Endothelial cell of umbilical vein (primary cell): ENCODE measurements at regions of chr14 and their contacts with region 1.

Region 1: DNA sequence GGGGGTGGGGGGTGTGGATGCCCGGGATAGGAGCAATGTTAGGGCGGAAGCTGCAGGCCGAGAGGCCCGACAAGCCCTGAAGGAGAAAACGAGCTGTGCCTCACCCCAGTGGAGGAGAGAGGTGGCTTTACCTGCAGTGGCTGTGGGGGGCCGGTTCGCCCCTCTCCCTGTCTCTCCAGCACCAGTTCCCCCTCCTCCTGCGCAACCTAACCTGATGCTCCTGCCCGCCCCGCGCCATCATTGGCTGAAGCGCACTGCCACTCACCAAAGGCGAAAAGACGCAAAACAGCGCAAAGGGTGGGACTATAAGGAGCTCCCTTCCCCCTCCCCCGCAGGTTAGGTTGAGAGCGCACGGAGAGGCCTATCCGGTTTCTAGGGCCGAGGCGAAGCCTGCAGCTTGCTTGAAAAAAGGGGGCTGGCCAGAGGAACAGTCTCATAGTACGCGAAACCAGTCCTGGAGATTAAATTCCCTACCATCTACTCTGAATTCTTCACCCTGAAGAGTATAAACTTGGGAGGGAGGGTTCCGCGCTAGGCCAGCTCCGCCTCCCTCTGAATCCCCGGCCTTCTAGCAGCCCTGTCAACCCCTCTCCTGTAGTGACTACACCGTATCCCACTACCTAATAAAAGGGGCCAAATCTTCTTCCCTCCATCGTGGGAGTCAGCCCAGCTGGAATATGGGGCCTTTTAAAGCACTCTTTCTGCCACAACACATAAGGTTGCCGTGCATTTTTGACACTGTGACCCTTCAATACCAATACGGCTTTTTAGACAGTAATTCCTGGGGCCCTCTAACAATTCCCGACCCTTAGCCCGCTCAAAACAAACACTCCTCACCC is 18.6 kb downstream of the CHD8 start:
- DNase-seq: peak; percentile 98
- H3K4me3 ChIP-seq: peak overlapping the region; percentile 52 to 97 (median 92)
- H3K27ac ChIP-seq: peak overlapping the region; percentile 68
- H3K4me1 ChIP-seq: peaks cover 15% of the 10 kb centered on the region
- H3K27me3 ChIP-seq: no peaks in the 10 kb centered on the region
- CTCF ChIP-seq: no peak
- POLR2A ChIP-seq: peak; percentile 85

Region 2: DNA sequence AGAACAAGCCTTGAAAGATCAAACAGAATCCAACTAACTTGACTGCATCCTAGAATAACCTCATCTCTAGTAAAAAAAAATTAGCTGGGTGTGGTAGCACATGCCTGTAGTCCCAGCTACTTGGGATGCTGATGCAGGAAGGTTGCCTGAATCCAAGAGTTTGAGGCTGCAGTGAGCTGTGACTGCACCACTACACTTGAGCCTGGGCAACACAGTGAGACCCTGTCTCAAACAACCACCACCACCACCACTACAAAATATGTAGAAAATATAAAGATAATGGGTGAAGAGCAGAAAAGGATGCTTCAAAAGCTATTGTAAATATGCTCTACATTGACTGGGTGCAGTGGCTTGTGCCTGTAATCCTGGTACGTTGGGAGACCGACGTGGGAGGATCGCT is 80.8 kb before region 1 on chr14:
- CTCF ChIA-PET with region 1: no interaction called
- POLR2A ChIA-PET with region 1: no interaction called
- dilution Hi-C with region 1: no loop called
- intact Hi-C with region 1: no loop called
- DNase-seq: no peak
- H3K4me3 ChIP-seq: no peak overlapping the region
- H3K27ac ChIP-seq: no peak overlapping the region
- H3K4me1 ChIP-seq: no peaks in the 10 kb centered on the region
- H3K27me3 ChIP-seq: no peaks in the 10 kb centered on the region
- CTCF ChIP-seq: no peak
- POLR2A ChIP-seq: no peak

Region 3: GRCh38 chr14:21383848-21384493 is 53.3 kb before region 1 on chr14 and contains the start of gene SUPT16H:
- CTCF ChIA-PET with region 1: no interaction called
- POLR2A ChIA-PET with region 1: interaction called, 5 read pairs
- dilution Hi-C with region 1: no loop called
- intact Hi-C with region 1: loop called (anchors 1 kb)
- DNase-seq: peak; percentile 98
- H3K4me3 ChIP-seq: peak within 1 kb of the TSS; percentile 56 to 68 (median 68)
- H3K27ac ChIP-seq: peak within 1 kb of the TSS; percentile 86
- H3K4me1 ChIP-seq: peaks cover 29% of the 10 kb centered on the region
- H3K27me3 ChIP-seq: no peaks in the 10 kb centered on the region
- CTCF ChIP-seq: no peak
- POLR2A ChIP-seq: peak; percentile 61
- total RNA-seq, gene SUPT16H: 94.2 and 100 TPM in 2 replicates

Region 4: DNA sequence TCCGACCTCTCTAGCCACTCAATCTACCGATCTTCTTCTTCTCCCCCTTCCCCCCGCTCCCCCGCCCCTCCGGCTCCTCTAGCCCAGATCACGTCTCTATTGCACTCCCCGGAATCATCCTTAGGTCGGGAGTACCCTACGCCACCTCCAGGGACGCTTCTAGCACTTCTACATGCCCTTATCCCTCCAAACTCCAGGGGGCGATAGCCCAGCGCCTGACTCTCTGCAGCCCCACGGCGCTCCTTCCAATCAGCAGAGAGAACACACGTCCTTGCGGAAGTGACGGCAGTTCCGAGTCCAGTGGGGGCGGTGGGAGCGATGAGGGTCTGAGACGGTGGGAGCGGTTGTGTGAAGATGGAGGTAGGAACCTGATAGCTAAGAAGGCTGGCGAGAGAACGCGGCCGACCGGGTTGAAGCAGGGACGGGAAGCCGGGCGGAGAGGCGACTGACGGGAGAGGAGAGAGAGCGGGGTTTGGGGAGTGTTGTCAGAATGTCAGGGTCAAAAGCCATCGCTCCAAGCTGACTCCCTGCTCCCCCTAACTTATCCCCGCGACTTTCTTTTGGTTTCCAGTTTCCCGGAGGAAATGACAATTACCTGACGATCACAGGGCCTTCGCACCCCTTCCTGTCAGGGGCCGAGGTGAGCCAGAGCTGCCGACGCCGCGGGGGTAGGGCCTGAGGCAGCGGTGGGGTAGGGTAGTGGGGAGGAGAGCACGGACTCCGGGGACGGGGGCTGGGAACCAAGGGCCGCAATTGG is 39.8 kb after region 1 on chr14 and contains the starts of genes RAB2B and TOX4:
- CTCF ChIA-PET with region 1: interaction called, 13 read pairs
- POLR2A ChIA-PET with region 1: interaction called, 3 read pairs
- dilution Hi-C with region 1: no loop called
- intact Hi-C with region 1: loop called (anchors 1 kb)
- DNase-seq: peak; percentile 99
- H3K4me3 ChIP-seq: peak within 1 kb of the TSS; percentile 69 to 95 (median 93)
- H3K27ac ChIP-seq: peak within 1 kb of the TSS; percentile 97
- H3K4me1 ChIP-seq: peaks cover 20% of the 10 kb centered on the region
- H3K27me3 ChIP-seq: no peaks in the 10 kb centered on the region
- CTCF ChIP-seq: peak; percentile 91 to 99
- POLR2A ChIP-seq: peak; percentile 15
- total RNA-seq, gene RAB2B: 29.1 and 30.6 TPM in 2 replicates
- total RNA-seq, gene TOX4: 63.2 and 67.4 TPM in 2 replicates